Natural killer cell (primary cell): ENCODE measurements at regions of chr10 and their contacts with region 1.

Region 1: DNA sequence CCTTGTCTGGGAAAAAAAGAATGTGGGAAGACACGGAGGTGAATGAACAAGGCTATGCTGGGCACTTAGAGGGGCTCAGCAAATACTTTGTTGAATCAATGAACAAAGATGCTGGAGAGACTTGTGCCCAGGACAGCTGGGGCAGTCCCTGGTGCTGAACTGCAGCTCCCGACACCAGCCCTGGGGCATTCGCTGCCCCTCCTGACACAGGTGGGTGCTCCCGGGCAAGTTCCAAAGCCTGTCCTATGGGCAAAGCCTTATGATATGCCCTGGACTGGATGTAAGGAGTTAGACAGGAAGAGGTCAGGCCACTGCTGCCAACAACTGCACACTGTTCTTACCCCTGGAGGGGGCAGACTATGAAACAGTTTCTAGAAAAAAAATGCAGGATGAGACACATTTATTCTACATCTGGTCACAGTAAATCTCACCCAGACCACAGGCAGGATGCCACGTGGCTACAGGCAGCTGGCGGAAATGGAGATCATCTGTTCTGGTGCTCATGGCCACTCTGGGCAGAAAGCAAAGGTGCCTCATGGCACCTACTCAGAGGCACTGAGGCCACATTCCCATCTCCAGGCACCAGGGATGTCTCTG is 21.9 kb upstream of the FRAT2 start:
- DNase-seq: peak; percentile 49 to 73
- ATAC-seq: peak; percentile 91 to 93 (median 92)
- H3K4me3 ChIP-seq: no peak overlapping the region
- H3K4me3 Mint-ChIP-seq: peak overlapping the region; percentile 64
- H3K27ac ChIP-seq: peak overlapping the region; percentile 62
- H3K27ac Mint-ChIP-seq: peak overlapping the region; percentile 82 to 89
- H3K4me1 ChIP-seq: peaks cover 24% of the 10 kb centered on the region
- H3K4me1 Mint-ChIP-seq: peaks cover 17% of the 10 kb centered on the region in 2 donors
- H3K27me3 ChIP-seq: no peaks in the 10 kb centered on the region
- H3K27me3 Mint-ChIP-seq: no peaks in the 10 kb centered on the region
- CTCF ChIP-seq: peak; percentile 16

Region 2: GRCh38 chr10:97278491-97278989 is 77.9 kb before region 1 on chr10:
- intact Hi-C with region 1: loop called (anchors 2 kb)
- DNase-seq: peak in 1 of 2 donors; percentile 74
- ATAC-seq: peak; percentile 79 to 87 (median 83)
- H3K4me3 ChIP-seq: no peak overlapping the region
- H3K4me3 Mint-ChIP-seq: no peak overlapping the region
- H3K27ac ChIP-seq: no peak overlapping the region
- H3K27ac Mint-ChIP-seq: no peak overlapping the region
- H3K4me1 ChIP-seq: peaks cover 3% of the 10 kb centered on the region
- H3K4me1 Mint-ChIP-seq: peaks cover 0 to 8% of the 10 kb centered on the region in 2 donors
- H3K27me3 ChIP-seq: no peaks in the 10 kb centered on the region
- H3K27me3 Mint-ChIP-seq: no peaks in the 10 kb centered on the region
- CTCF ChIP-seq: peak; percentile 70

Region 3: GRCh38 chr10:97388152-97388551 is 31.7 kb after region 1 on chr10:
- intact Hi-C with region 1: no loop called
- DNase-seq: no peak
- ATAC-seq: peak in 1 of 3 donors; percentile 21
- H3K4me3 ChIP-seq: no peak overlapping the region
- H3K4me3 Mint-ChIP-seq: no peak overlapping the region
- H3K27ac ChIP-seq: no peak overlapping the region
- H3K27ac Mint-ChIP-seq: no peak overlapping the region
- H3K4me1 ChIP-seq: no peaks in the 10 kb centered on the region
- H3K4me1 Mint-ChIP-seq: no peaks in the 10 kb centered on the region
- H3K27me3 ChIP-seq: no peaks in the 10 kb centered on the region
- H3K27me3 Mint-ChIP-seq: no peaks in the 10 kb centered on the region
- CTCF ChIP-seq: no peak